ENCODE measurements at regions of chr1 and their contacts with region 1.

Region 1: DNA sequence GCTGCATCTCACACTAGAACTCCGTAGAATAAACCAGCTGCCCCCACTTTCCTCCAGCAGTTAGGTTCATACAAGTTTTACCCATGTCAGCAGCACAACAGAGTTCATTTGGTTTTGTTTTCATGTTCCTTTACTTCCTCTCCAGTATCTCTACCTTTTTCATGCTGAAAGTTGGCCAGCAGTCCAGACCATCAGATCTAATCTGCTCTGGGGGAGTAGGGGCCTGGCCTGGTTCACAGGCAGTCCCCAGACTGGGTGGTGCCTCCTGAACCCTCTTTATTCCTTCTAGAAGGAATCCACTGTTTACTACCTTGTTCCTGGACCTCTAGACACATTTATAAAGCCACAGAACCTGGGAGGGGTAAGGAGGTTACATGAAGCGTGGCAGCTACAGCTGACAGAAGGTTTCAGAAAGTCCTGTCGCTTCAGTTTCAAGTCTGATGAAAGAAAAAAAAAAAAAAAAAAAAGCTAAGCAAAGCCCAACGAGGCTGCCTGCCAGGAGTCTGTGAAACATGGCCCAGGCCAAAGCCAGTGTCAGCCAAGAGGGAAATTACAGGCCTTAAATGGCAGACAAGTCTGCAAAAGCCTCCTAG is 184.6 kb upstream of the JUN start:
- DNase-seq: peak; percentile 85 to 93
- ATAC-seq: peak; percentile 36 to 61 (median 54)
- H3K4me3 ChIP-seq: peak overlapping the region; percentile 23
- H3K27ac ChIP-seq: peak overlapping the region; percentile 97
- H3K4me1 ChIP-seq: peaks cover 57% of the 10 kb centered on the region
- H3K27me3 ChIP-seq: no peaks in the 10 kb centered on the region
- CTCF ChIP-seq: peak; percentile 12

Region 2: DNA sequence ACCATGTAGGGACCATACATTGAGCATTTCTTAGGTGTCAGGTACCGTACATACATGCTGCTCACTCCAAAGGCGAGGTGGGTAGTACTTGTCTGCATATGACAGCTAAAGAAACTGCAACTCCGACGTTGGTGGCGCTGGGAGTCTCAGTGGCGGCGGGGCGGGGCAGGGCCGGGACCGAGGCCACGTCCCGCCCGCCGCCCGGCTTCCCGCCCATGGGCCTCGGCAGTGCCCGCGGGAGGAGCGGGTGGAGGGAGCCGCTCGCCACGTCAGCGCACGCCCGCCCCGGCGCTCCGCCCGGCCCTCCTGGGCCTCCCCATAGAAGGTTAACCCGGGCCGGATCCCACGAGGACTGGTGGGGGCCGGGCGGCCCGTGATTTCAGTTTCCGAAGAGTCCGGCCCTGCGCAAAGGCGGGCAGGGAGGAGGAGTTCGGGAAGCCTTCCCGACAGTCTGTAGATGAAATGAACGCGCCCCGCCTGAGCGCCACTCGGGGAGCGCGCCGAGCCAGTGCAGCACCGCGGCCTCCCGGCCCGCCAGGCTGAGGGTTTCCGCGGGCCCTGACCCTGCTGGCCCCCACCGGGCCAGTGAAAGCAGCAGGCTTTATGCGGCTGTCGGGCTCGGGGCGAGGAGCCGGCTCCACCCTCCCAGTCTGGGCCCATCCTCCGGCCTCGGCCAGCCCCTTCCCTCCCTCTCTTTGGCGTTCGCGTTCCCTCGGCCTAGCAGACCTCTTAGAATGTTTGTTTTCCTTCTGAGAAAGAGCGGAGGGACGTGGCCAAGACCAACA is 64.8 kb before region 1 on chr1:
- intact Hi-C with region 1: loop called in 1 of 2 experiments (anchors 2 kb)
- DNase-seq: peak; percentile 95 to 97
- ATAC-seq: peak; percentile 90 to 94 (median 92)
- H3K4me3 ChIP-seq: peak overlapping the region; percentile 72
- H3K27ac ChIP-seq: peak overlapping the region; percentile 95
- H3K4me1 ChIP-seq: peaks cover 59% of the 10 kb centered on the region
- H3K27me3 ChIP-seq: no peaks in the 10 kb centered on the region
- CTCF ChIP-seq: no peak

Region 3: GRCh38 chr1:59007820-59008598 is 39.6 kb after region 1 on chr1:
- intact Hi-C with region 1: loop called in 1 of 2 experiments (anchors 5 kb)
- DNase-seq: no peak
- ATAC-seq: no peak
- H3K4me3 ChIP-seq: no peak overlapping the region
- H3K27ac ChIP-seq: peak overlapping the region; percentile 54
- H3K4me1 ChIP-seq: peaks cover 11% of the 10 kb centered on the region
- H3K27me3 ChIP-seq: no peaks in the 10 kb centered on the region
- CTCF ChIP-seq: no peak

Region 4: GRCh38 chr1:59143133-59143487 is 174.7 kb after region 1 on chr1:
- intact Hi-C with region 1: loop called in 1 of 2 experiments (anchors 5 kb)
- DNase-seq: no peak
- ATAC-seq: peak; percentile 16 to 38 (median 23)
- H3K4me3 ChIP-seq: no peak overlapping the region
- H3K27ac ChIP-seq: peak overlapping the region; percentile 69
- H3K4me1 ChIP-seq: peaks cover 46% of the 10 kb centered on the region
- H3K27me3 ChIP-seq: no peaks in the 10 kb centered on the region
- CTCF ChIP-seq: no peak

Region 5: DNA sequence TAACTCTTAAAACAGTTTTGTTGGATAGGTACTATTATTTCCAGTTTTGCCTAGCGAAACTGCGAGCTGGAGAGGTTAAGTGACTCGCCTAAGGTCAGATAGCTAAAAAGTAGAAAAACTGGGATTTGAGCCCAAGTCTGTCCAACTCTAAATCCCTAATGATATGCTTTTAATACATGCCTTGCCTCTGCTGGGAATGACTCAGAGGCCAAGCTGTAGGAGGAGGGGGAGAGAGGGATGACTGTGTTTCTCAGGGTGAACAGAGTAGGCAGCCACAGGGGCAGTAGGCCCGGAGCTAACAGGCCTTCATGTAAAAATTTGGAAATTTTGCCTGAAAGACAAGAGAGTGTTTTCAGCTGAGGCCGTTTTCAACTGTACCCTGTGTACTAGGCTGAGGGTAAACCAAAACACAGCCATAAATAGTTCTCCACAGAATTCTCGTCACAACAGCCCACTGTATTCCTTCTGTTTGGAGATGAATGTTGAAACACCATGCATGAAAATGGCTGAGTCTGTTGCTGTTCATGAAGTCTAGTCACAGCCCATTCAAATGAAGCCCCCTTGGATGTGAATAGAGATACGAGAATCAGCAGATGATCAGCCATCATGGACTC is 738.8 kb after region 1 on chr1:
- intact Hi-C with region 1: loop called in 1 of 2 experiments (anchors 10 kb)
- DNase-seq: peak; percentile 55 to 69
- ATAC-seq: peak; percentile 75 to 85 (median 82)
- H3K4me3 ChIP-seq: no peak overlapping the region
- H3K27ac ChIP-seq: peak overlapping the region; percentile 78
- H3K4me1 ChIP-seq: peaks cover 55% of the 10 kb centered on the region
- H3K27me3 ChIP-seq: no peaks in the 10 kb centered on the region
- CTCF ChIP-seq: no peak